ENCODE measurements at regions of chr2 and their contacts with region 1.

Region 1: DNA sequence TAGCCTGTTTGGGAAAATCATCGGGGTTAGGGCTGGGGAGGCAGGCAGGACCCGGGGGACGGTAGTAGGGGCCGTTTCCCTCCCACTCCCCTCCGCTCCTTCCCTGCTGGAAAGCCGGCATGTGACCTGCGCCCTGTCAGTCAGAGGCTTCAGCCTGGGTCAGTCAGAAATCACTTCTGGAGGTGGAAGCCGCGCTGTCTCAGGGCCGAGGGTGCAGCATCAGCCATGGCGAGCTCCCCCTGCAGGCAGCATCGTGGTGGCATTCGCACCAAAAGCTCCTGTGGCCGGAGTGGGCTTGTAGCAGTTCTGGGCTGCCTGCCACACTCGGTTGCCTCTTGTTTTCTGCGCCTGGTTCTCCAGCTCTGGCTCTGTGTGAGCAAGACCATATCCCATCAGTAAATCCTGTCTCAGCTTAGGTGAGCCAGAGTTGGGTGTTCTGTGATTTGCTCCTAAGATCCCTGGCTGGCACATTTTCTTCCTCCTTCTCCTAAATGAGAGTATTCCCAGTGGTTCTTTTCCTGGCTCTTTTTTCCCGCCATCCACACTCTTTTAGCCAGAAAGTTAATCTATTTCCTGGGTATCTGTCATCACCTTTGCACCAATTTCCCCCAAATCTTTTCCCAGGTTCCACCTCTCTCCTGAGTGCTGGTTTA is 123.9 kb upstream of the CD302 start:
- DNase-seq: peak; percentile 41 to 62
- ATAC-seq: peak; percentile 95 to 99
- H3K4me3 ChIP-seq: no peak overlapping the region
- H3K27ac ChIP-seq: no peak overlapping the region
- H3K4me1 ChIP-seq: no peaks in the 10 kb centered on the region
- CTCF ChIP-seq: peak; percentile 46
- EP300 ChIP-seq: no peak
- POLR2A ChIP-seq: no peak
- RAD21 ChIP-seq: peak; percentile 42 to 61; a peak in 4 of 5 replicates

Region 2: DNA sequence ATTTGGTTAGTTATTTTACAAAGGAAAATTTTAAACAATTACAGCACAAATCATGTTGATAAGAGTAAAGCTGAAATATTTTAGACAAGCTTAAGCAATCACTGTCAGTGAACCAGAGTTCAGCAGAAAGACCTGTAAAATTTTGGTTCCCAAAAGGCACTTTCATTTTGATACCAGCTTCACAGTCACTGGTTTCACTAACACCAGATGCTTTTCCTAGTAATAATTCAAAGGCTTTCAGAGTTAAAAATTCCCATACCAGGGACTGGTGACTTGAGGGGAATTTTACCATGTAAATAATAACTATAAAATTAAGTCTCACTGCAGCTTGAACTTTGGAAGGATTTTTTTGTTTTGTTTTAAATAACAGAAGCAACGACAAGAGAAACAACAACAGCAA is 21.5 kb before region 1 on chr2:
- CTCF ChIA-PET with region 1: interaction called, 17 read pairs
- POLR2A ChIA-PET with region 1: no interaction called
- DNase-seq: no peak
- ATAC-seq: no peak
- H3K4me3 ChIP-seq: no peak overlapping the region
- H3K27ac ChIP-seq: no peak overlapping the region
- H3K4me1 ChIP-seq: peaks cover 5% of the 10 kb centered on the region; the same call in 2 of the 3 replicates
- CTCF ChIP-seq: no peak
- EP300 ChIP-seq: no peak
- POLR2A ChIP-seq: no peak
- RAD21 ChIP-seq: no peak

Region 3: GRCh38 chr2:159939946-159940345 is 18.1 kb after region 1 on chr2:
- CTCF ChIA-PET with region 1: interaction called, 32 read pairs
- POLR2A ChIA-PET with region 1: no interaction called
- DNase-seq: peak; percentile 7 to 19
- ATAC-seq: peak; percentile 54 to 67; a peak in 4 of 6 replicates
- H3K4me3 ChIP-seq: no peak overlapping the region
- H3K27ac ChIP-seq: no peak overlapping the region
- H3K4me1 ChIP-seq: 0 out of 3 replicates have a peak, but pooled peaks cover 4% of the 10 kb centered on the region
- CTCF ChIP-seq: peak; percentile 55
- EP300 ChIP-seq: no peak
- POLR2A ChIP-seq: no peak
- RAD21 ChIP-seq: peak; percentile 55 to 65

Measured in A549 (cell line).